GM10248 (cell line): ENCODE measurements at regions of chr10 and their contacts with region 1.

Region 1: GRCh38 chr10:905503-905902 is 26.0 kb downstream of the LARP4B start:
- DNase-seq: no peak
- CTCF ChIP-seq: no peak

Region 2: GRCh38 chr10:895319-895718 is 10.2 kb before region 1 on chr10:
- CTCF ChIA-PET with region 1: interaction called, 10 read pairs
- POLR2A ChIA-PET with region 1: no interaction called
- DNase-seq: no peak
- CTCF ChIP-seq: no peak

Region 3: DNA sequence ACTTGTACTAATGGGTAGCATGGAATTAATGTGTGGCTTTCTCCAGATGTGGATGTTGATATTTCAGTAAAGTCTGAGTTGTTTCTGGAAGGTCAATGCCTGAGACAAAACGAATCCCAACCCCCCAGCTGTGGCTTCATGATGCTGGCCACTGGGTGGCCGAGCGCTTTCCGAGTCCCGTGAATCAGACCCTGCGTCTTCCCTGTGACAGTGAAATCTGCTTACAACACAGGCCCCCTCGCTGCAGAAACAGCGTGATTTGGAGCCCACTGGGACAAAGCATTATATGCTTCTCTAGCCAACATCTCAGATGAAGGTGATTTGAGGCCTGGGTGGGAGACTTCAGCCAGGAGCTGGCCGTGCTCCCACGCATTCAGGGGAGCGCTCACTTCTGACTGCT is 275.3 kb after region 1 on chr10:
- CTCF ChIA-PET with region 1: no interaction called
- POLR2A ChIA-PET with region 1: no interaction called
- DNase-seq: no peak
- CTCF ChIP-seq: no peak